Aorta (tissue), 5 donors: ENCODE measurements at regions of chrX and their contacts with region 1.

Region 1: GRCh38 chrX:41558531-41558930 is 111.4 kb downstream of the NYX start:
- DNase-seq: no peak
- ATAC-seq: peak; percentile 55
- H3K4me3 ChIP-seq: no peak overlapping the region
- H3K27ac ChIP-seq: no peak overlapping the region
- H3K4me1 ChIP-seq: no peaks in the 10 kb centered on the region
- H3K27me3 ChIP-seq: no peaks in the 10 kb centered on the region

Region 2: DNA sequence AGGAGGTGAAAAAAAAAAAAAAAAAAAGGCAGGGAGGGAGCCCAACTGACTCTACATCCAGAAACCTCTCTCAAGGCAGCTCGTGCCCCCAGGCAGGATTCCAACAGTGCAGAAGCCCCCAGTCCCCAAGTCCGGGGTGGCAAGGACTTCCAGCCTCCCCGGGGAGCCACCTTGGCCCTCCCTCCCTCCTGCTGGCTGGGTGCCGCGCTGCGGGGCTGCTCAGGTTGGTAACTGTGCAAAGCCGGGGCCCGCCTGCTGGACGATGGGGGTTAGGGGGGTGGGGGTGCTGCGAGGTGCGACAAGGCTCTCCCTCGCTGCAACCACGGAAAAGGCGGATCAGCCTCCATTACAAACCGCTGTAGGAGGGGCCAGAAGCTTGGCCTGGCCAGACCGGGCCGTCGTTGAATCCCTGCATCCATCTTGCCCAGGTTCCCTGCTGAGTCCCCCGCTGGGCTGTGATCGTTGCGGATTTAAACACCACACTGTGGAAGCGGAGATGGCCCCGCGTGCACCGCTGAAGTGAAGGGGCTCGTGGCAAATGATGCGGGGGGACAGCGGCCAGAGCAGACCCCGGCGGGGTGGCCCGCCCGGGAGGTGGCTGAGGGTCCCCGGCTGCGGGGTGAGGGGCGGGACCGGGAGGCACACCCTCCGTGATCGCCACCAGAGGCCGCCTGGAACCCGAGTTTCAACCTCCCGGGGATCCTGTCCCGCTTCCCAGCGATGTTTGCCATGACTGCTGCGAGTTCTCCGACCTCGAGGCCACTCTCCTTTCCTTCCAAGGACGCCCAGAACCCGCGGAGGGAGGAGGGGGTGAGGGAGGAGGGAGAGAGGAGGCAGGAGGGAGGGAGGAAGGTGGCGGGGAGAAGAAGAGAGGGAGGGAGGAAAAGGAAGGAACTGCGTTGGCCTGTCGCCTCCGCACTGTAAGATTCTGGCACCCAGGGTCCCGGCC is 282.6 kb before region 1 on chrX:
- intact Hi-C with region 1: loop called in 1 of 2 experiments (anchors 10 kb)
- DNase-seq: peak; percentile 80 to 87
- ATAC-seq: peak; percentile 77
- H3K4me3 ChIP-seq: peak overlapping the region; percentile 13 to 21
- H3K27ac ChIP-seq: peak overlapping the region in 1 of 2 donors; percentile 32
- H3K4me1 ChIP-seq: no peaks in the 10 kb centered on the region
- H3K27me3 ChIP-seq: no peaks in the 10 kb centered on the region

Region 3: DNA sequence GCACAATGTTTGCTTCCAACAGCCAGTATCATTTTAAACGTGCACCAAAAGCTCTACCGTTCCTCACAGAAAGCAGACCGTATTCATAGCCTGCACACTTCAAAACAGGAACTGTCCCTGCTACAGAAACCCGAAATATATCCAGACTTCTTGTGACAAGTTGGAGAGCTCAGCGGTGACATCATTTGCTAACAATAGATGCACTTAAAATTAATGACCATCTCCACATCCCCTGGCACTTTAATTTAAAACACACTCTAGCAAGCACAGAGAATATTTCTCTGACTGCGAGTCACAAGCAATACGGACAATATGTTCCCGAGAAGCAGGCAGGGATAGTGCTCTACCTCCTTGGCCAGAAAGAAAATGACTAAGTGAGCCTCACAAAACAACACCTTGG is 108.9 kb before region 1 on chrX:
- intact Hi-C with region 1: loop called in 1 of 2 experiments (anchors 10 kb)
- DNase-seq: no peak
- ATAC-seq: peak; percentile 58
- H3K4me3 ChIP-seq: no peak overlapping the region
- H3K27ac ChIP-seq: peak overlapping the region in 1 of 2 donors; percentile 64
- H3K4me1 ChIP-seq: no peaks in the 10 kb centered on the region
- H3K27me3 ChIP-seq: no peaks in the 10 kb centered on the region

Region 4: DNA sequence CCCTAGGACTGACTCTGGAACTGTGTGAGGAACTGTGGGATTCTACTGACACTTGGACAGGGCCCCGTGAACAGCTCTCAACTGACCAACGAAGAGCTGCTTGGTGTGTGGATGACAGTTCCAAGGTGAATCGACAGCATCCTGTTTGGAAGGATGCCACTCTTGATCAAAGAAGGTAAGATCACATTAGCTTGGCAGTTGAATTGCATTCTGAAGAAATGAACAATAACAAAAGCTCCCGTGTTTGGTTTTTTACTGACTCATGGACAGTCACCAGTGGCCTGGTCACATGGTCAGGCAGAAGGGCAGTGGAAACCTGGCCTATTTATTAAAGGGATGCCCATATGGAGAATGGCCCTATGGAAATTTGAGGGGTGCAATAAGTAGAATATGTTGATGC is 97.1 kb after region 1 on chrX:
- intact Hi-C with region 1: no loop called
- DNase-seq: no peak
- ATAC-seq: no peak
- H3K4me3 ChIP-seq: no peak overlapping the region
- H3K27ac ChIP-seq: no peak overlapping the region
- H3K4me1 ChIP-seq: no peaks in the 10 kb centered on the region
- H3K27me3 ChIP-seq: no peaks in the 10 kb centered on the region

Region 5: DNA sequence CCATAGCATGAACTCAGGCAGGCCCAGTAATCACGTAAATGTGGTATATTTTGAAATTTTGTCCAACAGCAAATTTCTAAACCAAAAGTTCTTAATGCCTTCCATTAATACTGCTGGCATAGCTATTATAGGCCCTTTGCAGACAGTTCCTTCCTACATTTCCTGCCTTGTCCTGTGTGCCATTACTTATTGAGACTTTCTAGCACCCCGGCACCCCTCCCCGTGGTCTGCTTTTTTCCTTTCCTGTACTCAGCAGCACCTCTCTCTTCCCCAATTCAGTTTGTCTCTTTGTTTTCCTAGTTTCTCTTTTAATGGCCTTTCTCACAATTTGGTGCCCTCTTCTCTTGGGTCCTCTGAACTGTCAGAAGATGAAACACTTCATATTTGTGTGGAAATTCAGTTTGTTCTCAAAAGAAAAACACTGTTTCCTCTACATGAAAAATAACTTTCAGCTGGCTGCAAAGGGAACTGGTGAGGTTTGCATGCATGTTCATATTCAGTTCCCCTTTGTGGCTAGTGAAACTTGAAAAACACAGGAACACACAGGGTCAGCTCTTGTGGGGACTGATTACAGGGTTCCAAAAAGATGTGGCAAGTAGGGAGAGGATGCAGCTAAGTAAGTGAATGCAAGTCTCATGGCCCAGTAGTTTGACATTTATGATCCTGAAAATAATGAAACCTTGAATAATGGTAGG is 147.3 kb after region 1 on chrX:
- intact Hi-C with region 1: loop called (anchors 5 kb)
- DNase-seq: no peak
- ATAC-seq: no peak
- H3K4me3 ChIP-seq: no peak overlapping the region
- H3K27ac ChIP-seq: no peak overlapping the region
- H3K4me1 ChIP-seq: peaks cover 0 to 2% of the 10 kb centered on the region in 2 donors
- H3K27me3 ChIP-seq: no peaks in the 10 kb centered on the region

Region 6: GRCh38 chrX:41759817-41760216 is 201.3 kb after region 1 on chrX:
- intact Hi-C with region 1: loop called in 1 of 2 experiments (anchors 5 kb)
- DNase-seq: no peak
- ATAC-seq: no peak
- H3K4me3 ChIP-seq: no peak overlapping the region
- H3K27ac ChIP-seq: no peak overlapping the region
- H3K4me1 ChIP-seq: no peaks in the 10 kb centered on the region
- H3K27me3 ChIP-seq: no peaks in the 10 kb centered on the region